ENCODE measurements at regions of chr3 and their contacts with region 1.

Region 1: DNA sequence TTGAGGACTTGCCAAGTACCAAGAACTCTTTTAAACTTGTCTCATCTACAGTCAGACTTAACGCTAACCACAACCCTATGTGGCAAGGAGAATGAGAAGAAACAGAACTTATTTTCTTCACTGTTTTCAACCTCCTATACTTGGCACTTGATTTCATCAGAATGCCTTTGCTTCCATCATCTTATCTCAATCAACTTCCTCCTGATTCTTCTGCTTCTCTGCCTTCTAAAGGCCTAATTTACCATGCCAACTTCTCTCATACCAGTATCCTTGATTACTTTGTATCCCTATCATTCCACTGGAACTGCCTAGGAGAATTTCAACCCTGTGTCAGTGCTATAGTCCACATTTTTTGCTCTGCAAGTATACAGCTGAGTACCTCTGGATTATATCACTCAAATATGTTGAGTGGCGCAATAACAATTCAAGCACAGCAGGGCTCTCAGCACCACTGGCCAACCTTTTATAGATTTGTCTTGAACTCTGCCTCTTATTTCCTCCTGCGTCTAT is 413.6 kb downstream of the ROBO1 start:
- DNase-seq: no peak
- ATAC-seq: no peak
- H3K4me3 ChIP-seq: no peak overlapping the region
- H3K27ac ChIP-seq: peak overlapping the region in 1 of 12 donors; percentile 40
- H3K4me1 ChIP-seq: no peaks in the 10 kb centered on the region
- H3K27me3 ChIP-seq: no peaks in the 10 kb centered on the region
- CTCF ChIP-seq: no peak
- POLR2A ChIP-seq: no peak

Region 2: DNA sequence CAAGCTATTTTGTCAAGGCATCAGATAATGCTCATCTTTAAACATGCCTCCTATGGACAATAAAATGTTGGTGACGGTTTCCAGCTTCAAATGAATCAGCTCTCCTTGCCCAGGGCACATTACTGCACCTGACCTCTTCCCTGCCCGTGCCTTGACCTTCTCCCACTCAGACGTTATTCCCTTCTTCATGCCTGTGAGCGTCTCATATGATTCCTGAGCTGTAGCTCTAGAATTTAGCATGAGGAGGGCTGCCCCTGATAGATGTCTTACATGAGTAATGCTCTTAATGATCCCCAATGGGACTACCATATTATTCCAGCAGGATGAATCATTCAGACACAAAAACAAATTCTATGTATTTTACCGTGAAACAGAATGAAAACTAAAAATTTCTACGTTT is 349.1 kb before region 1 on chr3:
- intact Hi-C with region 1: no loop called
- DNase-seq: no peak
- ATAC-seq: peak in 1 of 4 donors; percentile 62
- H3K4me3 ChIP-seq: no peak overlapping the region
- H3K27ac ChIP-seq: no peak overlapping the region
- H3K4me1 ChIP-seq: peaks cover 0 to 6% (median 0%) of the 10 kb centered on the region in 12 donors
- H3K27me3 ChIP-seq: no peaks in the 10 kb centered on the region
- CTCF ChIP-seq: no peak
- POLR2A ChIP-seq: no peak

Region 3: DNA sequence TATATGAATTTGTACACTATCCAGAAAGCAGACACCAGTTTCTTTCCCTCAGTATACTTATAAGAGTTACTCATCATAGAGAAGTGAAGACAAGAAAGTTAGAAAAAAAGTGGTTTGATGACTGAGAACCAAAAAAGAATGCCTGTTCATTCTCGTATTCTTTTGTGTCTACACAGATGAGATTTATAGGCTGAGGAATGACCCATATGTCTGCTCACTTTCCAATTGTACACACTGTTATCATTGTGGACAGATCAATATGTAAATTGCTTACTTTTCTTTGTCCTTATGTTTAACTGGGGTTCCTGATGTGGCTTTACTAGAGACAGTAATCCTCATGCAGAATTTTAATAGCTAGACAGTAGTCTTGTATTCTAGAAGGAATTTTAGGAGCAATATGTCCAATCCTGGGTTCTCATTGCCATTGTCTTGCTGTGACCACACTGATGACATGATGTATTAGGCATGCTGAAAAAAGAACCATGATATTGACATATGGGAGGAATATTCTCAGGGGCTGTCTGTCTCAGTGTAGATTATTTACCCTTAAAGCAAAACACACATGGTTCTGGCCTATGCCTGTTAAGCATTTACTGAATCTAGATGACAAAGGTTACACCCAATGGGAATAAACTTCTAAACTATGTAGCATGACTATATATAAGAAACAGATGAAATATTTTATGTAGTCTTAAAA is 256.1 kb before region 1 on chr3:
- intact Hi-C with region 1: loop called in 1 of 10 experiments (anchors 10 kb)
- DNase-seq: no peak
- ATAC-seq: no peak
- H3K4me3 ChIP-seq: no peak overlapping the region
- H3K27ac ChIP-seq: no peak overlapping the region
- H3K4me1 ChIP-seq: no peaks in the 10 kb centered on the region
- H3K27me3 ChIP-seq: no peaks in the 10 kb centered on the region
- CTCF ChIP-seq: no peak
- POLR2A ChIP-seq: no peak

Region 4: DNA sequence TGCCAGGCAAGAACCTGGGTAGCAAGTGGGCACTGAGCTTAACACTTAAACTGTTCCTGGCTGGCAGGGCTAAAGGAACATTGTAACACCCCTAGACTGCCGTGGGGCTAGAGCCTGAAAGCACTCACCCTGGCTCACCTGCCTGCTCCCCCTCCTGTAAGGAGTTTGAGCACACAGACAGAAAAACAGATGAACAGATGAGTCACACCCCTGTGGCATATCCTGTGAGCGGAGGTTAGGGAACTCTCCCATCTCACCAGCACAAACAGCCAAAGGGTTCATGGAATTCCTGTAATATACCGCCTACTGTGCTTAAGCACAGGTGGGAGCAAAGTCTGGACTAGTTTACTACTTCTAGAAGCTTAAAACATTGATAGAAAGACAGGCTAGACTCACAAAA is 113.5 kb after region 1 on chr3:
- intact Hi-C with region 1: no loop called
- DNase-seq: no peak
- ATAC-seq: no peak
- H3K4me3 ChIP-seq: no peak overlapping the region
- H3K27ac ChIP-seq: no peak overlapping the region
- H3K4me1 ChIP-seq: no peaks in the 10 kb centered on the region
- H3K27me3 ChIP-seq: no peaks in the 10 kb centered on the region
- CTCF ChIP-seq: no peak
- POLR2A ChIP-seq: no peak